AG04449 (cell line): ENCODE measurements at regions of chr15 and their contacts with region 1.

Region 1: DNA sequence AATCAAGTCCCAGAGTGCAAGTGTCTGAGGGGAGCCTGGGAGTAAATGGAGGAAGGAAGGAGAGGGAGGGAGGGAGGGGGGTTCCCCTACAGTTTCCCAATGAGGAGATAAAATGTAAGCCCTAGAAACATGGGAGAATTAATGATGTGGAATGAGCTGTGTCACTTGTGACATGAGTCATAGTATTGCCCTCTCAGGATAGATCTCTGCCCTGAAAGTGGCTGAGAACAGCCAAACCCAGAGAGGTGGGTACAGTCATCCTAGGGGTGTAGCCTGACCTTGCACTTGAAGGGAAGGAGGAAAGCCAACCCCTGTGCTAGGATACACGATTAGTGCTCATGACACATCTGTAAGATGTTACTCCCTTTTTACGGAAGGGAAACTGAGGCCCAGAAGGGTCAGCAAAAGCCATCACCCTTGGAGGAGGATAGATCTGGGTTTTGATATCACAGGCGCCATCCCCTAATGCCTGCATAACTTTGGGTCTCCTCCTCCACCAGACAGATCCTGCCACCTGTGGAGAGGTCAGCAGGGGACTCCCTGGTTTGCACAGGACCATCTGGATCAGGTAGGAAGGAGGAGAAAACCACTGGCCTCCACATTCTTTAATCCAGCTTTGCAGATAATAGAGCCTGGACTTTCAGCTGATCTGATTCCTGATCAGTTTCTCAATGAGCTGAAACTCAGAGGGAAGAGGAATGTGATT is 23.1 kb upstream of the USP3 start:
- DNase-seq: no peak
- H3K4me3 ChIP-seq: no peak overlapping the region
- CTCF ChIP-seq: no peak

Region 2: DNA sequence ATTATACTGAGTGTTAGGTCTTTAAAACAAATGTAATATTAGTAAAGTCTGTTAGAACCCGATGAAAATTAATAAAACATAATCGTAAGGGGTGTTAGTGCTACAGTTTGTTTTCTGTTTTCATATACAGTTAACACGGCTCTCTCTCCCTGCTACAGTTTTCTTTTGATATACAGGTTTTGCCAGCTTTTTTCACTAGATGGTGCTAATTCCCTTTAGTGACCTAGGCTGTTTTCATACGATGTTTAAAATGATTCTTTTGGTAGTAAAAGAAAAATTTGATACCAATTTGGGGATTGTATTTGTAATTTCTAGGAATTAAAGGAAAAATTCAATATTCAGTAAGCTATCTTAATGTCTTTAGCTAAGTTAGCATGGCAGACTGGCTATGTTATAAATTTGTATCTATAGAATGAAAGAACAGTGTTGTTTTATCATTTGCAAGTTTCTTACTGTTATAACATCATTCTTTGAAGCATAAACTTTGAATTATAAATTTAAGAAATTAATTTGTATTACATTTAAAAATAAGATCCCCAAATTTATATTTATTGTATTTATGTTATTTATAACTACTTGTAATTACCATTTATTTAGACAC is 192.4 kb before region 1 on chr15:
- CTCF ChIA-PET with region 1: interaction called, 14 read pairs
- POLR2A ChIA-PET with region 1: no interaction called
- DNase-seq: no peak
- H3K4me3 ChIP-seq: no peak overlapping the region
- CTCF ChIP-seq: peak; percentile 39

Region 3: DNA sequence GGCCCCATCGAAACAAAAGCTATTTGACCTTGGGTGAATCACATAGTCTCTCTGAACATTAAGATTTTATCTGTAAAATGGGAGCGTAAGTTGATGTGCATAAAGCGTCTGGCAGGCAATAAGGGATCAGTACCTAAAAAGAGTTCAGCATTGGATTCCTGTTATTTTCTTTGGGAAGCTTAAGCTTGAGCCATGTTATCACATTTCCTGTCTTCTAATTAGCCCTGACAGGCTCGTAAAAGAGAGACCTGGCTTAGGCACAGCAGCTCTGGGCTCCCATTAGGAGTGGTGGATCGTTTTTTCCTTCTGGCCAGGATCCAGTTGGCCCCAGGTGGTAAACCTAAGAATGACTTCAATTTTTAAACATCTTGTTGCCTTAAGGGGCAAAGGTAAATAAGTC is 73.6 kb before region 1 on chr15:
- CTCF ChIA-PET with region 1: no interaction called
- POLR2A ChIA-PET with region 1: no interaction called
- DNase-seq: no peak
- H3K4me3 ChIP-seq: no peak overlapping the region
- CTCF ChIP-seq: no peak

Region 4: GRCh38 chr15:63497642-63498467 is 16.6 kb after region 1 on chr15:
- CTCF ChIA-PET with region 1: interaction called, 59 read pairs
- POLR2A ChIA-PET with region 1: interaction called, 3 read pairs
- DNase-seq: no peak
- H3K4me3 ChIP-seq: no peak overlapping the region
- CTCF ChIP-seq: no peak

Region 5: DNA sequence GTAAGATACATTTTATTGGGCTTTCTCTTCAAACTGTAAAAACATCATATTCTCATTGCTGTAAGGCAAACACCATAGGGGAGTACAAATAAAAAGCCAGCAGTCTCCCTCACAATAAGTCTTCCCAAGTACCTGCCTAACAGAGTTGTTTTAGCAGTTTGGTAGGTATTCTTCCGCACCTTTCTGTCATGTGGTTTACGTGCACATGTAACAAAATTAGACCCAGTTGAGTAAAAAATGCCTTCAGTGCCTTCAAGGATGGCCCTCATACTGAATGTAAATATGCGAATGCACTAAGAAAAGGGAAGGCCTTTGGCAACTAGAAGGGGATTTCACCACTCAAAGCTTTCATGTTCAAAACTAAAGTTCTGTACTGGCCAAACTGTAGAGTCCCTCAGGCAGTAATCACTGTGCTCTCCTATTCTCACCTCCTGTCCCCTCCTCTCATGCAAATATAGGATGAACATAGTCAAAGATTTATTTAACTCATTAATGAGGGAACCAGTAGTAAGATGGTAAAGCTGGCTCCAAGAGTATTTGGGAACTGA is 49.6 kb after region 1 on chr15:
- CTCF ChIA-PET with region 1: no interaction called
- POLR2A ChIA-PET with region 1: no interaction called
- DNase-seq: no peak
- H3K4me3 ChIP-seq: no peak overlapping the region
- CTCF ChIP-seq: no peak

Region 6: GRCh38 chr15:63600616-63601025 is 119.4 kb after region 1 on chr15:
- CTCF ChIA-PET with region 1: interaction called, 13 read pairs
- POLR2A ChIA-PET with region 1: no interaction called
- DNase-seq: peak; percentile 23
- H3K4me3 ChIP-seq: peak overlapping the region; percentile 76
- CTCF ChIP-seq: no peak